H1 (cell line): ENCODE measurements at regions of chr10 and their contacts with region 1.

Region 1: DNA sequence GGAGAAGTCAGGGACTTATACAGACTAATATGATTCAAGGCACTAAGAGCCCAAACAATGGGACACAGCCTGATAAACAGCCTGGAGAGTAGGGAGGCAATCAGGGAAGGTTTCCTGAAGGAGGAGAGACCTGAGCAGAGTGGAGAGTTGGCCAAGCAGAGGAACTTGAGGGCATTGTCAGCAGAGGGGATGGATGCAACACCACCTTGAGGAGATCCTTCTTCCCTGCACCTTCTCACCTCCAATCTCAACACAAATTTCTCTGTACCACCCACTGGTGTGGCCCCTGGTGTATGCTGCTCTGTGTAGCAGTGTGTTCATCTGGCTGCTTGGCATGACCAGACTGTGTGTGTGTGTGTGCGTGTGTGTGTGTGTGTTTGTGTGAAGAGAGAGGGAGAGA is 146.2 kb downstream of the WDR11 start:
- DNase-seq: no peak
- H3K4me3 ChIP-seq: no peak overlapping the region
- H3K27ac ChIP-seq: no peak overlapping the region
- H3K4me1 ChIP-seq: peaks cover 0 to 4% (median under 1%) of the 10 kb centered on the region in 4 experiments; a peak in 2 of 7 replicates
- H3K27me3 ChIP-seq: no peaks in the 10 kb centered on the region; a peak in 2 of 7 replicates
- CTCF ChIP-seq: no peak
- EP300 ChIP-seq: no peak
- POLR2A ChIP-seq: no peak
- RAD21 ChIP-seq: no peak; a peak in 1 of 4 replicates

Region 2: DNA sequence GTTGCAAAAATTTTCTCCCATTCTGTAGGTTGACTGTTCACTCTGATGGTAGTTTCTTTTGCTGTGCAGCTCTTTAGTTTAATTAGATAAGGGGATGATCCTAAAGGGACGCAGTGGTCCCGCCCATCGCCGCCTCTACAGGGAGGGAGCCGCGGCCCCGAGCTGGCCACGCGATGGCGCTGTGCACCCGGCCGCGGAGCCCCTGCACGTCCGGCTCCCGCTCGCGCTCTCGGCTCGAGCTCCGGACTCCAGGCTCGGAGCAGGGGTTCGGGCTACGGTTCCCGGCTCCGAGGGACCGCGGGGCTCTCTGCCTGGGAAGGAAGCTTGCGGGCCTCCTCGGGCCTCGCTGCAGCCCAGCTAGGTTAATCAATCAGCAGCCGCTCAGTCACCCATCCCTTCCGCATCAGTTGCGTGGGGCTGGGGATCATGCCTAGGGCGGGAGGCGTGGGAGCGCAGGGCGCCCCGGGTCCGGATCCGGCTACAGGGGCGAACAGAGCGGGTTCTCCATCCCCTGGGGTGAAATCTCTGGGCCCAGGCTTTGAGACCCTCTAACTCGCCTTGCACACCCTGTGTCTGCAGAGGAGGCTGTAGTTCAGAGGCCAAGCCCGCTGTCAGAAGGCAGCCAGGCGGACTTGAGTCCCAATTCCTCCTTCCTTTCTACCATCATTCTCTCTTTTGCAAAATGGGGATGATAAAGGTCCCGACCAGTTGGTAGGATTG is 48.3 kb before region 1 on chr10:
- CTCF ChIA-PET with region 1: interaction called, 10 read pairs
- POLR2A ChIA-PET with region 1: no interaction called
- DNase-seq: peak; percentile 44 to 88
- H3K4me3 ChIP-seq: peak overlapping the region; percentile 16 to 68 (median 52)
- H3K27ac ChIP-seq: no peak overlapping the region
- H3K4me1 ChIP-seq: peaks cover 5 to 21% (median 13%) of the 10 kb centered on the region in 4 experiments
- H3K27me3 ChIP-seq: peaks cover 11 to 16% (median 13%) of the 10 kb centered on the region in 4 experiments
- CTCF ChIP-seq: peak; percentile 77 to 92 (median 90)
- EP300 ChIP-seq: no peak
- POLR2A ChIP-seq: no peak
- RAD21 ChIP-seq: peak; percentile 95 to 97

Region 3: DNA sequence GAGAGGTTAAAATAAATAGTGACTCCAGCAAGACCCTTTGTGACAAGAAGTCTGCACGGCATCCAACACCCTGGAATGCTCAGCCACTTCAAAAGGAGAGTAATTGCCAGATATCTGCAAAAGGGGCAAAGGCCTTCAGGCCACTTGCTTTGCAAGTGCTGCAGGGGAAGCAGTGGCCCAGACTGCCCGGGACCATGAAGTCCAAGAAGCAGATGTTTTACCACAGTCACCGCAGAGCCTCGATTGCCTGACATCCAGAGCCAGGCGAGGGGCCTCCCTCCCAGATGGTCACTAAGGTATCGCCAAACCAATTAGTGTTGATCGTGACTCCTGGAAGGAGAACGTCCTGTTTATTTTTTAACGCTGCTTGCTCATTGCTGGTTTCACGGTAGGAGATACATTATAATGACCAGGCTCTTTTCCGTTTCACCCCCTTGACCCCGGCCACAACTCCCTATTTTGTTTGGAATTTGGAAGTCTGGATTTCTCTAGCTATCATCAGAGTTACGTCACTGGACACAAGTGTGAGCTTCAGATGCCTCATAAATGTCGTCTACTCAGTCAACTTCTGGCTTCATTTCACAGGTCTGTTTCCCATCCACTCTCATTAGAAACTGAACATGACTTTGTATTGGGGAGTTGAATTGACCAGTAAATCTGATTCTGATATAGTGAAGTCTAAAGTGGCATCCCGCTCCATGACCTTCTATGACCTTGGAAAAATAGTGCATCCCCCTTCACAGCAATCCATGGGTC is 130.0 kb after region 1 on chr10:
- CTCF ChIA-PET with region 1: no interaction called
- POLR2A ChIA-PET with region 1: no interaction called
- DNase-seq: no peak
- H3K4me3 ChIP-seq: no peak overlapping the region
- H3K27ac ChIP-seq: no peak overlapping the region
- H3K4me1 ChIP-seq: no peaks in the 10 kb centered on the region
- H3K27me3 ChIP-seq: no peaks in the 10 kb centered on the region
- CTCF ChIP-seq: no peak
- EP300 ChIP-seq: no peak
- POLR2A ChIP-seq: no peak
- RAD21 ChIP-seq: no peak

Region 4: DNA sequence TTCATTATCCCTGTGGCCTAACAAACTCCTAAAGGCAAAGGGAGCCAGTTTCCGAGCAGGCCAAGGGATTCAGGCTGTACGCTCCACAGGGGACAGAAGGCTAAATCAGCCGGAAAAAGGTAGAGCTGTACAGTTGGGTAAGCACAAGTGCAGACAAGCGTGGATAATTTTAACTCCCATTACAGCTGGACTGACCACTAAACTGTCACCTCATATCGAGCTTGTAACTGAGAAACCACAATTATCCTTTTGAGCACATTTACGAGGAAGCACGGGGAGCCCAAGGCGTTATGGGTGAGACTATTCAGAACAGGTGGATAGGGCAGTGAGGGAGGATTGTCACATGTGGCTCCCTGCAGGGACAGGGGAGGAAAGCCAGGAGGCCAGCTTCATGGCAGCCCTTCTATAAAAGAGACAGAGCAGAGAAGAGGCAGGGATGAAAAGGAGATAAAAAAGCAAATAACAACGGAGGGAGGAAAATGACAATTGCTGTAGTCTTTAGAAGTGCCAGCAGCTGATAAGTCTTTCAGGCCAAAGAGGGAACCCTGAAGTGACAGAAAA is 312.9 kb after region 1 on chr10:
- CTCF ChIA-PET with region 1: no interaction called
- POLR2A ChIA-PET with region 1: no interaction called
- DNase-seq: no peak
- H3K4me3 ChIP-seq: no peak overlapping the region
- H3K27ac ChIP-seq: no peak overlapping the region
- H3K4me1 ChIP-seq: peaks cover 0 to 14% (median 13%) of the 10 kb centered on the region in 4 experiments; a peak in 4 of 7 replicates
- H3K27me3 ChIP-seq: no peaks in the 10 kb centered on the region; a peak in 1 of 7 replicates
- CTCF ChIP-seq: no peak
- EP300 ChIP-seq: no peak
- POLR2A ChIP-seq: no peak
- RAD21 ChIP-seq: no peak